BJ (cell line): ENCODE measurements at regions of chr2 and their contacts with region 1.

Region 1: GRCh38 chr2:72973566-72974435 is 56.5 kb downstream of the EMX1 start:
- DNase-seq: no peak
- H3K4me3 ChIP-seq: no peak overlapping the region
- H3K27me3 ChIP-seq: no peaks in the 10 kb centered on the region
- CTCF ChIP-seq: peak; percentile 93

Region 2: GRCh38 chr2:72813841-72814240 is 160.0 kb before region 1 on chr2:
- CTCF ChIA-PET with region 1: no interaction called
- POLR2A ChIA-PET with region 1: no interaction called
- DNase-seq: no peak
- H3K4me3 ChIP-seq: no peak overlapping the region
- H3K27me3 ChIP-seq: no peaks in the 10 kb centered on the region
- CTCF ChIP-seq: no peak

Region 3: GRCh38 chr2:72895759-72896281 is 78.0 kb before region 1 on chr2:
- CTCF ChIA-PET with region 1: interaction called, 122 read pairs
- POLR2A ChIA-PET with region 1: no interaction called
- DNase-seq: no peak
- H3K4me3 ChIP-seq: no peak overlapping the region
- H3K27me3 ChIP-seq: peaks cover 18% of the 10 kb centered on the region
- CTCF ChIP-seq: no peak; the same call in 1 of the 2 replicates

Region 4: GRCh38 chr2:72915907-72916742 is 57.7 kb before region 1 on chr2:
- CTCF ChIA-PET with region 1: interaction called, 10 read pairs
- POLR2A ChIA-PET with region 1: no interaction called
- DNase-seq: no peak
- H3K4me3 ChIP-seq: no peak overlapping the region
- H3K27me3 ChIP-seq: peaks cover 68% of the 10 kb centered on the region
- CTCF ChIP-seq: no peak

Region 5: GRCh38 chr2:72963423-72964145 is 10.2 kb before region 1 on chr2:
- CTCF ChIA-PET with region 1: interaction called, 46 read pairs
- POLR2A ChIA-PET with region 1: no interaction called
- DNase-seq: no peak
- H3K4me3 ChIP-seq: no peak overlapping the region
- H3K27me3 ChIP-seq: no peaks in the 10 kb centered on the region
- CTCF ChIP-seq: no peak

Region 6: DNA sequence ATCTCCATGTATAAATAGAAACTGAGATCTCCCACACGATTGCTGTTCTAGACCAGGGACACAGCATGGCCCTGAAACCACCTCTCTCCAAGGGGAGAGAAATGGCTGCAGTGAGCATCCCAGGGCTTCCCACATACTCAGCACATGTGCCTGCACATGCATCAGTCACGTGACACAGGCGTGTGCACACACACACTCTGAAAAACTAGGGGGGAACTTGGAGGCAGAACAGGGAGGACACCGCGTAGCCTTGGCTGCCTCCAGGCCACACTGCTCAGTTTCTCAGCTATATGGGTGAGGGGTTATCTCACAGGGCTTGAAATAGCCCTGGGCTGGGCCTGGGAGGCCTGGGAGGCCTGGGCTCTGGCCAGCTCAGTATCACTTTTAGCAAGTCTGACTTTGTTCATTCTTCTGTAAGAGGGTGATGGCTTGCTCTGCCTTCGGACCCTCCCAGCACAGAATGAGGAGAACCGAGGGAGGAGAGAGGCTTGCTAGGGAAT is 10.4 kb after region 1 on chr2:
- CTCF ChIA-PET with region 1: interaction called, 20 read pairs
- POLR2A ChIA-PET with region 1: no interaction called
- DNase-seq: no peak
- H3K4me3 ChIP-seq: no peak overlapping the region
- H3K27me3 ChIP-seq: no peaks in the 10 kb centered on the region
- CTCF ChIP-seq: no peak

Region 7: GRCh38 chr2:72993147-72993932 is 19.5 kb after region 1 on chr2:
- CTCF ChIA-PET with region 1: interaction called, 14 read pairs
- POLR2A ChIA-PET with region 1: no interaction called
- DNase-seq: no peak
- H3K4me3 ChIP-seq: no peak overlapping the region
- H3K27me3 ChIP-seq: no peaks in the 10 kb centered on the region
- CTCF ChIP-seq: peak; percentile 71

Region 8: GRCh38 chr2:73243884-73244570 is 270.2 kb after region 1 on chr2:
- CTCF ChIA-PET with region 1: no interaction called
- POLR2A ChIA-PET with region 1: no interaction called
- DNase-seq: peak; percentile 29
- H3K4me3 ChIP-seq: no peak overlapping the region
- H3K27me3 ChIP-seq: no peaks in the 10 kb centered on the region
- CTCF ChIP-seq: no peak

Region 9: GRCh38 chr2:73257425-73258125 is 283.8 kb after region 1 on chr2:
- CTCF ChIA-PET with region 1: no interaction called
- POLR2A ChIA-PET with region 1: no interaction called
- DNase-seq: no peak
- H3K4me3 ChIP-seq: no peak overlapping the region
- H3K27me3 ChIP-seq: no peaks in the 10 kb centered on the region
- CTCF ChIP-seq: no peak